PC-3 (cell line): ENCODE measurements at regions of chr12 and their contacts with region 1.

Region 1: GRCh38 chr12:96985480-96986362 is 78.7 kb downstream of the NEDD1 start:
- DNase-seq: peak; percentile 62
- ATAC-seq: peak; percentile 87
- H3K4me3 ChIP-seq: peak overlapping the region; percentile 68
- H3K27ac ChIP-seq: no peak overlapping the region
- H3K4me1 ChIP-seq: peaks cover 15% of the 10 kb centered on the region
- H3K27me3 ChIP-seq: 0 out of 2 replicates have a peak, but pooled peaks cover 2% of the 10 kb centered on the region
- CTCF ChIP-seq: peak; percentile 95

Region 2: DNA sequence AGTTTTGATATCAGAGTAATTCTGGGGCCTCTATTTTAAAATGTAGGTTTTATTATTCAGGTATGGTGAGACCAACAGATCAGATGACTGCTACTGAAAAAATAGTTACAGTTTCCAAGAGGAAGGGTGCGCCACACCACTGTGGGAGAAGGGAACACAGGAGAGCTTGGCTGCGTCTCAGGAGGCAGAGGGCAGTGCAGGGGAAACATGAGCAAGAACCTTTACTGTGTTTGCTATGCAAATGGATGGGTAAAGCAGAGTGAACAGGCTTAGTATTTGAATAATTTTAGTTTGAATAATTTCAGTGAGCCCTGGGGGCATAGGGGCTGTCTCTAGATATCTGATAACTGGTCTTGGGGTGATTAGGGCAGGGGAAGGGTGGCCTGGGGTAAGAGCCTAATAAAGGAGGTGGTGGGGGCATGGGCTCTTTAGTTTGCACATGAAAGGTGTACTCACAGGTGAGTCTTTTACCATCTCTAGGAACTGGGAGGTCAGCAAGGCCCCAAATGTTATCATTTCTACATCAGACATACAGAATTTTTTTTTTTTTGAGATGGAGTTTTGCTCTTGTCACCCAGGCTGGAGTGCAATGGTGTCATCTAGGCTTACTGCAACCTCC is 275.5 kb before region 1 on chr12:
- CTCF ChIA-PET with region 1: no interaction called
- POLR2A ChIA-PET with region 1: no interaction called
- intact Hi-C with region 1: loop called (anchors 2 kb)
- DNase-seq: peak; percentile 63
- ATAC-seq: peak; percentile 100
- H3K4me3 ChIP-seq: no peak overlapping the region
- H3K27ac ChIP-seq: no peak overlapping the region
- H3K4me1 ChIP-seq: no peaks in the 10 kb centered on the region
- H3K27me3 ChIP-seq: no peaks in the 10 kb centered on the region
- CTCF ChIP-seq: peak; percentile 54

Region 3: GRCh38 chr12:96719660-96720363 is 265.9 kb before region 1 on chr12:
- CTCF ChIA-PET with region 1: no interaction called
- POLR2A ChIA-PET with region 1: no interaction called
- intact Hi-C with region 1: loop called (anchors 1 kb)
- DNase-seq: peak; percentile 63
- ATAC-seq: peak; percentile 70
- H3K4me3 ChIP-seq: peak overlapping the region; percentile 73
- H3K27ac ChIP-seq: peak overlapping the region; percentile 10; the same call in 1 of the 2 replicates
- H3K4me1 ChIP-seq: peaks cover 10% of the 10 kb centered on the region; the same call in 1 of the 2 replicates
- H3K27me3 ChIP-seq: no peaks in the 10 kb centered on the region
- CTCF ChIP-seq: no peak

Region 4: GRCh38 chr12:97061171-97061570 is 75.5 kb after region 1 on chr12:
- CTCF ChIA-PET with region 1: no interaction called
- POLR2A ChIA-PET with region 1: no interaction called
- intact Hi-C with region 1: no loop called
- DNase-seq: no peak
- ATAC-seq: no peak
- H3K4me3 ChIP-seq: no peak overlapping the region
- H3K27ac ChIP-seq: no peak overlapping the region
- H3K4me1 ChIP-seq: no peaks in the 10 kb centered on the region
- H3K27me3 ChIP-seq: peaks cover 44% of the 10 kb centered on the region
- CTCF ChIP-seq: no peak

Region 5: GRCh38 chr12:97308576-97309198 is 323.0 kb after region 1 on chr12:
- CTCF ChIA-PET with region 1: no interaction called
- POLR2A ChIA-PET with region 1: no interaction called
- intact Hi-C with region 1: loop called (anchors 1 kb)
- DNase-seq: peak; percentile 65
- ATAC-seq: no peak
- H3K4me3 ChIP-seq: no peak overlapping the region
- H3K27ac ChIP-seq: no peak overlapping the region
- H3K4me1 ChIP-seq: no peaks in the 10 kb centered on the region
- H3K27me3 ChIP-seq: peaks cover 24% of the 10 kb centered on the region; the same call in 1 of the 2 replicates
- CTCF ChIP-seq: peak; percentile 75

Region 6: DNA sequence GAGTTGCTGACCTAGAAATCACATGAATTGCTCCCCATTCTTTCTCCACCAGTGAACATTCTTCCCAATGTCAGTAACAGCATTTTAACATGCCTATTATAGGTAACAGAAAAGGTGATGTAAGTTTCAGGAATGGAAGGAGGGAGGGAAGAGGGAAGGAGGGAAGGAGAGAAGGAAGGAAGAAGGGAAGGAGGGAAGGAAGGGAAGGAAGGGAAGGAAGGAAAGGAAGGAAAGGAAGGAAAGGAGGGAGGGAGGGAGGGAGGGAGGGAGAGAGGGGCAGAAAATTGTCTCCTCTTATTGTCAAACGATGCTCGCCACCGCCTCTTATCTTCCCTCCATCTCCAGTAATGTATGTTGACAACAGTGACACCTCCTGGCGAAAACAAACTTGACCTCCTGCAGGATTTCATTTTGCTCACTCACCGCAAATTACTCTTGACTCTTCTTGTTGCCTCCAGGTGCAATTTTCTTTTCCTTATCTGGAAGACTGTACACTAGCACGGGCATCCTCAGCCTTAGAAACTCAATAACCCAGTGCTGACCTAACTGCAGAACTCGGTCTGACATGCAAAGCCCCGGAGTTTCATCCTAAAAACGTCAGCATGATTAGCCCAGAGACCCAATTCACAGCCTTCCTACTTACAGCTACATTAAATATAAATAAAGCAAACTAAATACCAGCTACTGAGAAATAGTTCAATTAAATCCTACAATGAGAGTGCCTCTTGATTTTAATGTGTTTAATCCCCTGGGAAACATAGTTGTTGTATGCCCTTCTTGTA is 1017.2 kb after region 1 on chr12:
- CTCF ChIA-PET with region 1: no interaction called
- POLR2A ChIA-PET with region 1: no interaction called
- intact Hi-C with region 1: loop called (anchors 1 kb)
- DNase-seq: peak; percentile 77
- ATAC-seq: 0 out of 2 replicates have a peak, but pooled peaks have one; percentile 49
- H3K4me3 ChIP-seq: no peak overlapping the region
- H3K27ac ChIP-seq: no peak overlapping the region
- H3K4me1 ChIP-seq: no peaks in the 10 kb centered on the region
- H3K27me3 ChIP-seq: no peaks in the 10 kb centered on the region
- CTCF ChIP-seq: peak; percentile 60

Region 7: DNA sequence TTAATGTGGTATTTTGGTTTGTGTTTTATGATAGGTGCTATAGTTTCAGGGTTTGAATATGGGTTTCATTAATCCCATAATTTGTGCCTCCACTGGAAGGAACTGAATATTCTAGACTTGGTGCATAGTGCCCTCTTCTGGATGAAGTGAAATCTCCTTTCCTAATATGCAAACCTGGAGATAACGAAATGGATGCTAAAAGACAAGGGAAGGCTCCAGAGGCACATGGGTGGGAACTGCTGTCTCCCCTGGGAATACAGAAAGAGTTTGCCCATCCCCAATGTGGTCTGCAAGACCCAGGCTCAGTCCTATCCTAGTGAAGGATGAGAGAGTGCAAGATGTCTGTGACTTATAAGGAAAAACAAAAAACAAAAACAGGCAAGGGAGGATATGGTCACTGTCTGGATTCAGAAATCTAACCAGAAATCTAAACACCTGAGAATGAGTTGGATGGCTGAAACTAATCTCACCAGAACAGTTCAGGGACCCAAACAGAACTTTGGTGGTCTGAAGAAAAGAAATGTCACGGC is 1387.4 kb after region 1 on chr12:
- CTCF ChIA-PET with region 1: no interaction called
- POLR2A ChIA-PET with region 1: no interaction called
- intact Hi-C with region 1: loop called (anchors 1 kb)
- DNase-seq: peak; percentile 68
- ATAC-seq: peak; percentile 56
- H3K4me3 ChIP-seq: no peak overlapping the region
- H3K27ac ChIP-seq: no peak overlapping the region
- H3K4me1 ChIP-seq: no peaks in the 10 kb centered on the region
- H3K27me3 ChIP-seq: peaks cover 72% of the 10 kb centered on the region
- CTCF ChIP-seq: peak; percentile 74

Region 8: DNA sequence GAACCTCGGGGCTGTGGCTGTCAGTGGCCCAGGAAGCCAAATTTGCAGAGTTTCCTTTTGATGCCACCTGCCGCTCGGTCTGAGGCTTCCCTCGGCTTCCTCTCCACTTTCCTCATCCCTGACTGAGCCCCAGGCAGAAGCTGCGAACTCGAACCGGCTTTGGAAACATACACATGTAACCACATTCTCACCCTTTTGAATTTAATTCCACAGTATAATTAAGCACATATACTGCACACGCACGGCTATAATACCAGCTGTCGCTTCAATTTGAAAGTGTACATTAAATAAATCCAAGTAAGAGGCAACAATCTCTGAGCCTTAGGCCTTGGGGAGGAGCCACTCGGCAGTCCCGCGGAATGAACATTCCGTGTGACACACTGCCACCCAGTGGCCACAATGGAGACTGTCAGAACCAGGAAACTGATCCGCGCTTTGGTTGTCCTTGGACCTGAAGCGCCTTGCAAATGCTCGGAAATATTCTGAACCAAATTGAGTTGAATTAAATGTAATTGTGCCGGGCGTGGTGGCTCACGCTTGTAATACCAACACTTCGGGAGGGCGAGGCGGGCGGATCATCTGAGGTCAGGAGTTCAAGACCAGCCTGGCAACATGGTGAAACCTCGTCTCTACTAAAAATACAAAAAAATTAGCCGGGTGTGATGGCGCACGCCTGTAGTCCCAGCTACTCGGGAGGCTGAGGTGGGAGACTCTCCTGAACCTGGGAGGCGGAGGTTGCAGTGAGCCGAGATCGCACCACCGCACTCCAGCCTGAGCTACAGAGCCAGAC is 1411.8 kb after region 1 on chr12:
- CTCF ChIA-PET with region 1: interaction called, 3 read pairs
- POLR2A ChIA-PET with region 1: no interaction called
- intact Hi-C with region 1: loop called (anchors 1 kb)
- DNase-seq: peak; percentile 91
- ATAC-seq: peak; percentile 88
- H3K4me3 ChIP-seq: peak overlapping the region; percentile 68
- H3K27ac ChIP-seq: no peak overlapping the region
- H3K4me1 ChIP-seq: peaks cover 21% of the 10 kb centered on the region
- H3K27me3 ChIP-seq: peaks cover 6% of the 10 kb centered on the region
- CTCF ChIP-seq: peak; percentile 88